ENCODE measurements at regions of chr19 and their contacts with region 1.

Region 1: GRCh38 chr19:7145494-7146485 is 76.3 kb downstream of the ZNF557 start:
- DNase-seq: no peak
- H3K4me3 Mint-ChIP-seq: no peak overlapping the region
- H3K27ac Mint-ChIP-seq: no peak overlapping the region
- H3K4me1 Mint-ChIP-seq: no peaks in the 10 kb centered on the region
- H3K27me3 Mint-ChIP-seq: no peaks in the 10 kb centered on the region
- CTCF ChIP-seq: no peak

Region 2: DNA sequence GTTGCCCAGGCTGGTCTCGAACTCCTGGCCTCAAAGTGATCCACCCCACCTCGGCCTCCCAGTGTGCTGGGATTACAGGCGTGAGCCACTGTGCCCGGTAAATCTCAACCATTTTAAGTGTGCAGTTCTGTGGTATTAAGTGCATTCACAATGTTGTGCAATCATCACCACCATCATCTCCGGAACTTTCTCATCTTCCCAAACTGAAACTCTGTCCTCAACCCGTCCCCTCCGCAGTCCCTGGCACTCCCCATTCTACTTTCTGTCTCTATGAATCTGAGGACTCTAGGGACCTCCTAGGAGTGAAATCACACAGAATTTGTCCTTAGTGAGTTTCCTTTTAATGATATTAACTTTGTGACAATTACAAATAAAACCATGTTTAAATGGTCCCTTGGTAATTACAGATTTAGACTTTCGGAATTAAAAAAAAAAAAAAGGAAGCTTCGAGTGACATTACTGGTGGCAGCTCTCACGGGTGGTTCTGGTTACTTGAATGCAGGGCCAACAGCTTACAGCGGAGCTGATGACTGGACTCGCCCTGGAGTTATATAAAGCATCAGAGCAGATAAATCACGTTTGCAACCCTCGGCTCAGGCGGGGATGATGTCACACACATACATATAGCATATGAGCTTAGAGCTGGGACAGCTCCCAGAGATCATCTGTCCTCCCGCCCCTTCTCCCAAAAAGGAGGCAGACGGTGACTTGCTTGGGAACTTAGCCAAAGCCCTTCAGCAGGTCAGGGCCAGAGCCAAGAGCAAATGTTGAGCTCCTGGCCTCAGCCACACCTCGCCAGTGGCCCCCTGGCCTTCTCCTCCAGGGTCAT is 13.5 kb after region 1 on chr19:
- CTCF ChIA-PET with region 1: interaction called, 13 read pairs
- POLR2A ChIA-PET with region 1: no interaction called
- intact Hi-C with region 1: no loop called
- DNase-seq: peak; percentile 48
- H3K4me3 Mint-ChIP-seq: no peak overlapping the region
- H3K27ac Mint-ChIP-seq: no peak overlapping the region
- H3K4me1 Mint-ChIP-seq: no peaks in the 10 kb centered on the region
- H3K27me3 Mint-ChIP-seq: no peaks in the 10 kb centered on the region
- CTCF ChIP-seq: no peak

Region 3: DNA sequence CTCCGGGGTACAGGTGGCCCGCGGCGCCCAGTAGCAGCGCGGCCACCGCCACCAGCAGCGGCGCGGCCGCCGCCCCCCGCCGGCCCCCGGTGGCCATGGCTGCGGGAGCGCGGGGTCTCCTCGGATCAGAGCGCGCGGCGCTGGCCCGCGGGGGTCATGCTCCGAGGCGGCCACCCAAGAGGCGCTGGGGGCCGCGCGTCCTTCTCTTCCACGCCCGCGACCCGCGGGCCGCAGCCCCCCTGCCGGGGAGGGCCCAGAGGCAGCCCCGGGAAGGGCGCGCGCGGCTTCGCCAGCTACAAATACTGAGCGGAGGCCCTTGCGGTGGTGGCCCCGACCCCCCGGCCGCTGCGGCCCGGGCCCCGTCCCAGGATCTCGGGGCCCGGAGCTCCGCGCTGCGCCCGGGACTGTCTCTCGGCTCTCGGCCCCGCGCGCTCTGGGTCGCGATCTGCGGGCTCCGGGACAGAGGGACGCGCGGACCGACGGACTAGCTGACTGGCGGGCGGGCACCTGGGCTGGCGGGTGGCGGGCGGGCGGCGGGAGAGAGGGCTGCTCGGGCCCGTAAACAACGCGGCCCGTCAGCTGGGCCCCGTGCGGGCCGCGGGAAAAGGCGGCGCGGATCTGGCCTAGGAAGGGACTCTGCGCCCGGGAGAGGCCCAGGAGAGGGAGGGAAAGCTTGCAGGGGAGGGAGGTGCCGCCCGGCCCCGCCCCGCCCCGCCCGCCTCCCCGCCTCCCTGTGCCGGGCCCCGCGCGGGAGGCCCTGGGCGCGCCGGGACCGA is 148.2 kb after region 1 on chr19 and contains the start of gene INSR:
- CTCF ChIA-PET with region 1: interaction called, 3 read pairs
- POLR2A ChIA-PET with region 1: no interaction called
- intact Hi-C with region 1: loop called (anchors 5 kb)
- DNase-seq: peak; percentile 91
- H3K4me3 Mint-ChIP-seq: peak within 1 kb of the TSS; percentile 79
- H3K27ac Mint-ChIP-seq: no peak within 1 kb of the TSS
- H3K4me1 Mint-ChIP-seq: peaks cover 6% of the 10 kb centered on the region
- H3K27me3 Mint-ChIP-seq: no peaks in the 10 kb centered on the region
- CTCF ChIP-seq: no peak
- total RNA-seq, gene INSR: 8.8 and 11.8 TPM in 2 replicates

Region 4: DNA sequence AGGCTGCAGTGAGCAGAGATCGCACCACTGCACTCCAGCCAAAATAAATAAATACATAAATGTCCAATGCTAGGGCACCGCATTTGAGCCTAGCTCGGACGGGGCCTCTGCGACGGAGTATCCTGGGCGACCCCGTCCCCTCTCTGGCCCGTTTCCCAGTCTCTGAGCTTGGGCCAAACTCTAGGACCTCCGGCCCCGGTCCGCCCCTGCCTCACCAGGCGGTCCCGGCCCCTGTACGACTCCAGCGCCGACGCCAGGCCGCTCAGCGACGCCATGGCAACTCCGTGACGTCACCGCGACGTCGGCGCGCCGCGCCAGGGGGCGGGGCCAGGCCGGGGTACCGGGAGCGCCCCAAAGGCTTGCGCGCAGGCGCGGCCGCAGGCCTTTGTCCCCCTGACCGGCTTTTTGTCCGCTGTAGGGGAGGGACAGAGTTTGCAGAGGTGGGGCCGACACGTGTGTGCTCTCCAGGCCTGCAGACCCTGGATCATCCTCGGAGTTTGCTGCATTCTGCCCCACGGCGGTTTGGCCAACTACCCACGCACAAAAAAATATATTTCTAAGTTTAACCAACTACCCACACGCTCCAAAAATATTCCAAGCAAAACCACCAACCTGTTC is 343.1 kb after region 1 on chr19 and contains the start of gene PEX11G:
- CTCF ChIA-PET with region 1: no interaction called
- POLR2A ChIA-PET with region 1: no interaction called
- intact Hi-C with region 1: no loop called
- DNase-seq: peak; percentile 84
- H3K4me3 Mint-ChIP-seq: peak within 1 kb of the TSS; percentile 76
- H3K27ac Mint-ChIP-seq: peak within 1 kb of the TSS; percentile 87
- H3K4me1 Mint-ChIP-seq: peaks cover 14% of the 10 kb centered on the region
- H3K27me3 Mint-ChIP-seq: no peaks in the 10 kb centered on the region
- CTCF ChIP-seq: no peak
- total RNA-seq, gene PEX11G: 5.5 and 6.4 TPM in 2 replicates